Dorsolateral prefrontal cortex (tissue), 120 donors: ENCODE measurements at regions of chr21 and their contacts with region 1.

Region 1: DNA sequence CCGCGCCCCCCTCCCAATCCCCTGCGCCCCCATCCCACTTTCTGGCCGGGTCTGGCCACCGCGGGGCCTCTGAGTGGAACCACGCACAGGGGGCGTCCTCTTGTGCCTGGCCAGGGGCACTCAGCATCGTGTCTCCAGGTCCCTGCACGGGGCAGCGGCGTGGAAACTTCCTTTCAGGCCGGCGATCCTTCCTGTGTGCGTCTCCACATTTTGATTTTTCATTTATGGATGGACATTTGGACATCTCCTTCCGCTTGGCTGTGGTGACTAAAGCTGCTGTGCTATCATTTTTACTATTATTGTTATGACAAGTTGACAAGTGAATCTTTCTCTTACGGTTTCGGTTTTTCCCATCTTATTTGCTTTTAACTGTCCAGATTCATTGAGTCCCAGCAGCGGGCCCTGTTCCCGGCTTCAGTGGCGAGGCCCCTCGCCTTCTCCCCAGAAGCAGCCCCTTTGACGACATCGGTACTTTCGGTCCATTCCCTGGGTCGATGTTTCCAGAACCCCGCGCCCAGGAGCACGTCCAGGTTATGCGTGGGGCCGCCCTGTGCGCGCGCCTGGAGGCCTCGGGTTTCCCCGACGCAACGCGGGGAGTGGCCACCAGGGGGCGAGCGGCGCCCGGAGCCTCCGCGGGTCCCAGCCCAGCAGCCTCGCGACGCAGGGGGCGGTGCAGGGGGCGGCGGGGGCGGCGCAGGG is 12.4 kb upstream of the SLC19A1 start:
- DNase-seq: peak; percentile 66 to 91 (median 82)
- H3K4me3 ChIP-seq: peak overlapping the region; percentile 35 to 82 (median 65)
- H3K27ac ChIP-seq: peak overlapping the region in 54 of 59 donors; percentile 3 to 94 (median 82)
- H3K27me3 ChIP-seq: no peaks in the 10 kb centered on the region
- CTCF ChIP-seq: peak; percentile 57 to 91 (median 78)

Region 2: DNA sequence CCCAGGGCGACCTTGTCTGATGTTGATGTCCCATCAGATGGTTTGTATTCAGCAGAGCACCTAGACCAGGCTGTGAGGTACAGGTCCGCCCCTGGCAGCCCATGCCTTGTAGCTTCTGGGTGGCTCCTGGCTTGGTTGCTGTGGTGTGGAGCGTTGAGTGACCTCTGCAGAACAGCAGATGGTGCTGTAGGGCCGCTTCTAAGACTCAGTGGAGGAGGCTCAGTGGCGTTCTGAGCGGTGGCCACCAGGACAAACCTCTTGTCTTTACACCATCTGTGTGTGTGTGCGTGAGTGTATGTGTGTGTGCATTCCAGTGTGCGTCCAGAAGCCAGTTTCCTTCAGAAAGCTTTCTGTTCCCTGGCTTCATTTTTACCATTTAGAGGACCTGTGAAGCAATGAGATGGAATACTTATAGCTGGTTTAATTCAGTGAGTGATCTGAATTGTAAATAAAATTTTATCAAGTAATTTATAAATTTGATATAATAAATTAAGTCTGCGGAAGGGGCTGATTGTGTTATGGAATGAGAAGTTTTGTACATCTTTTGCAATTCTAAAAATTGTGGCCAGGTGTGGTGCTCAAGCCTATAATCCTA is 414.2 kb before region 1 on chr21:
- intact Hi-C with region 1: loop called in 1 of 2 experiments (anchors 10 kb)
- DNase-seq: peak; percentile 47 to 84 (median 76)
- H3K4me3 ChIP-seq: no peak overlapping the region
- H3K27ac ChIP-seq: no peak overlapping the region
- H3K27me3 ChIP-seq: no peaks in the 10 kb centered on the region
- CTCF ChIP-seq: peak in 55 of 56 donors; percentile 24 to 87 (median 77)

Region 3: GRCh38 chr21:45287438-45288391 is 266.9 kb before region 1 on chr21 and contains the start of gene POFUT2:
- intact Hi-C with region 1: loop called in 1 of 2 experiments (anchors 5 kb)
- DNase-seq: peak; percentile 91 to 99 (median 94)
- H3K4me3 ChIP-seq: peak within 1 kb of the TSS; percentile 55 to 89 (median 75)
- H3K27ac ChIP-seq: peak within 1 kb of the TSS in 39 of 59 donors; percentile 25 to 90 (median 65)
- H3K27me3 ChIP-seq: no peaks in the 10 kb centered on the region
- CTCF ChIP-seq: peak in 33 of 56 donors; percentile 8 to 50 (median 23)
- total RNA-seq, gene POFUT2: 13.5 to 37.4 (median 20.5) TPM

Region 4: GRCh38 chr21:45596704-45597318 is 42.2 kb after region 1 on chr21:
- intact Hi-C with region 1: loop called in 1 of 2 experiments (anchors 5 kb)
- DNase-seq: peak in 8 of 10 donors; percentile 29 to 68 (median 48)
- H3K4me3 ChIP-seq: no peak overlapping the region
- H3K27ac ChIP-seq: no peak overlapping the region
- H3K27me3 ChIP-seq: peaks cover 0 to 54% (median 16%) of the 10 kb centered on the region in 45 donors
- CTCF ChIP-seq: peak; percentile 30 to 82 (median 73)

Region 5: GRCh38 chr21:45643021-45643980 is 88.7 kb after region 1 on chr21 and contains the start of gene PCBP3:
- intact Hi-C with region 1: loop called in 1 of 2 experiments (anchors 10 kb)
- DNase-seq: peak; percentile 92 to 98 (median 94)
- H3K4me3 ChIP-seq: peak within 1 kb of the TSS in 57 of 59 donors; percentile 31 to 74 (median 51)
- H3K27ac ChIP-seq: peak within 1 kb of the TSS in 21 of 59 donors; percentile 24 to 82 (median 64)
- H3K27me3 ChIP-seq: peaks cover 0 to 60% (median 9%) of the 10 kb centered on the region in 45 donors
- CTCF ChIP-seq: no peak
- total RNA-seq, gene PCBP3: 11.0 to 29.9 (median 17.9) TPM

Region 6: DNA sequence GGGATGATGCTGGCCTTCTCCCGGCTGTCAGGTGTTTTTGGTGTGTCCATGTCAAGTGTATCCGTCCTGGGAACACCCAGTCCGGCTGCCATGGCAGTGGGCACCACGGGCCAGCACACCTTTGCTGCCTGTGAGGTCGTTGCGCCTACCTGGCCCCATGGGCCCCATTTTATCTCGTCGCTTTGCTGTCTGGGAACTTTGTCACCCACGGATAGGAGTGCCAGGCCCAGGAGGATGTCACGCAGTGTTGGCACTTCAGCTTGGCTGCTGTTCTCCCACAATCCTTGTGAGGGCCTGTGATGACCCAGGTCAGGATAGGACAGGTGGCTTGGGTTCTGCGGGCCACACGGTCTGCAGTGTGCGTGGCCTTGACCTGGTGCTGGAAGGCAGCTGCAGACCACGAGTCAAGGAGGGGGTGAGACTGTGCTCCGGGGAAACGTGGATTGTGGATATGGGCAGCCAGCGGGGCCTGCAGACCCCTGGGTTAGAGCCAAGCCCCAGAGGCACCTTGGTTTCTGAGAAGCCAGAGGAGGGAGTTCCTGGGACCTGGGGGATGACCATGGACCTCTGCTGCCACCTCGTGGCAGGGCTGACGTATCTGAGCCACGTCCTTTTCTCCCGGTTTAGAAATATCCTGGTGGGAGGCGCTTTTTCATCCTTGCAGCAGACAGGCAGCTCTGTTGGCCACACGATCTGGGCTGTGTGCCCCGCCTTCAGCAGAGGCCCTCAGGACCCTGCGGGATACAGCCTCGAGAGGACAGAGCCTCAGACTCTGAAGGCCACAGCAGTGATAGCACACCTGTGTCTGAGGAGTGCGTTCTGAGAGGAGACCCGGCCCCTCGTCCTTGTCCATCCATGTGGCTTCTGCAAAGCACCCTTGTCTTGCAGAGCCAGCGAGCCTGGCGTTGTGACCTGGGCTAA is 265.8 kb after region 1 on chr21:
- intact Hi-C with region 1: loop called (anchors 2 to 5 kb)
- DNase-seq: peak; percentile 66 to 92 (median 80)
- H3K4me3 ChIP-seq: no peak overlapping the region
- H3K27ac ChIP-seq: peak overlapping the region in 1 of 59 donors; percentile 36
- H3K27me3 ChIP-seq: no peaks in the 10 kb centered on the region
- CTCF ChIP-seq: peak; percentile 49 to 94 (median 86)

Region 7: GRCh38 chr21:45923146-45923545 is 368.5 kb after region 1 on chr21:
- intact Hi-C with region 1: loop called in 1 of 2 experiments (anchors 5 kb)
- DNase-seq: peak; percentile 67 to 88 (median 85)
- H3K4me3 ChIP-seq: peak overlapping the region in 1 of 59 donors; percentile 8
- H3K27ac ChIP-seq: peak overlapping the region in 2 of 59 donors; percentile 26 to 27
- H3K27me3 ChIP-seq: peaks cover 0 to 3% (median 0%) of the 10 kb centered on the region in 45 donors
- CTCF ChIP-seq: peak; percentile 64 to 96 (median 91)